ENCODE measurements at regions of chr9 and their contacts with region 1.

Region 1: DNA sequence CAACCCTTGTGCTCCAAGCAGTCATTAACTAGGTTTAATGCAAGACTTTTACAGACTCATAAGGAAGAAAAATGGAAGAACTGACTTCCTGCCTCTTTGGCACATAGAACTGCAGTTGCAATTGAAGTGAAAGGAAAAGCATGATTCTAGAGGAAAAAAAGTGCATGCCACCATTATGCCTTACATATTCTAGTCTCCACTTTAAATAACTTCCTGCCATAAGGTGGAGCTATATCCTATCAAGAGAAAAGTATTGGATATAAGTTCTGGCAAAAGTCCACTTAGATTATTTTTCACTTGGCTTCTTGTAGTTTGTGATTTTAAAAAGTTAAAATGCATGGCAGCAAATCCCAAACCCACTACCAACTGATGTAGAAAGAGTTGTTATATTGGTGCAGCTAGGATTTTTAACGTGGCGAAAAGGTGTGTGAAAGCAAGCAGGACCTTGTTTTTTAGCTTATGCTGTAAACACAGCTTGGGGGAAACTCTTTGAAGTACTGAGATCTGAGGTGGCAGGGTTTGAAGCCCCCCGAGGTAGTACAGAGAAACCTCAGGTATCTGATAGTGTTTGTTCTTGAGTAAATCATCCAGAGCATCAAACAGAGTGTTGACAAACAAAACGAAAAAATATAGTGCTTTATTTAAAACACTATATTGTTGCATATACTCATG is 117.9 kb downstream of the ANXA1 start:
- DNase-seq: peak in 1 of 3 donors; percentile 7
- H3K4me3 ChIP-seq: no peak overlapping the region
- H3K4me3 Mint-ChIP-seq: no peak overlapping the region
- H3K27ac ChIP-seq: no peak overlapping the region
- H3K27ac Mint-ChIP-seq: no peak overlapping the region
- H3K4me1 ChIP-seq: peaks cover 4 to 13% of the 10 kb centered on the region in 2 donors
- H3K4me1 Mint-ChIP-seq: peaks cover 14% of the 10 kb centered on the region
- H3K27me3 ChIP-seq: no peaks in the 10 kb centered on the region
- H3K27me3 Mint-ChIP-seq: peaks cover 0 to 2% (median 0%) of the 10 kb centered on the region in 3 donors
- CTCF ChIP-seq: no peak

Region 2: DNA sequence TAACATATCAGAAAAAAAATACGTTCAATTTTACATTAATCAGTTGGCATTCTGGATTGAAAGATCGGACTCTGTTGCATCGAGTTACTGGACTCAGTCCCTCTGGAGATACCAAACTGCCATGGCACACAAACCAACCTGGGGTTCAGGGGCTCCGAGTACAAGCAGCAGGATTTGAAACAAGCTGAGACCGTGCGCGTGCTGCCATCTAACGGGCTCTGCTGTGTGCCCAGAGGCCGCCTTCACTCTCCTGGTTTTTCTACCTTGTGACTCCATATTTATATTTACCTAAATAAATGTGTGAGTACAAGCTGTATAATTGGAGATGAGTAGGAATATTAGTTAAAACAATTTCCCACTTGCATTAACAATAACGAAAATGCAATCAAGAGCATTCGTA is 69.7 kb before region 1 on chr9:
- intact Hi-C with region 1: no loop called
- DNase-seq: no peak
- H3K4me3 ChIP-seq: no peak overlapping the region
- H3K4me3 Mint-ChIP-seq: no peak overlapping the region
- H3K27ac ChIP-seq: no peak overlapping the region
- H3K27ac Mint-ChIP-seq: no peak overlapping the region
- H3K4me1 ChIP-seq: peaks cover 8 to 19% of the 10 kb centered on the region in 2 donors
- H3K4me1 Mint-ChIP-seq: peaks cover 22% of the 10 kb centered on the region
- H3K27me3 ChIP-seq: no peaks in the 10 kb centered on the region
- H3K27me3 Mint-ChIP-seq: peaks cover 0 to 3% (median 2%) of the 10 kb centered on the region in 3 donors
- CTCF ChIP-seq: no peak

Region 3: GRCh38 chr9:73219985-73220626 is 49.5 kb before region 1 on chr9:
- intact Hi-C with region 1: loop called in 1 of 2 experiments (anchors 10 kb)
- DNase-seq: peak; percentile 77 to 97 (median 91)
- H3K4me3 ChIP-seq: no peak overlapping the region
- H3K4me3 Mint-ChIP-seq: peak overlapping the region in 1 of 2 donors; percentile 54
- H3K27ac ChIP-seq: peak overlapping the region; percentile 62 to 95
- H3K27ac Mint-ChIP-seq: peak overlapping the region; percentile 97 to 100 (median 99)
- H3K4me1 ChIP-seq: peaks cover 15 to 20% of the 10 kb centered on the region in 2 donors
- H3K4me1 Mint-ChIP-seq: peaks cover 27% of the 10 kb centered on the region
- H3K27me3 ChIP-seq: no peaks in the 10 kb centered on the region
- H3K27me3 Mint-ChIP-seq: peaks cover 0 to 4% (median 3%) of the 10 kb centered on the region in 3 donors
- CTCF ChIP-seq: no peak

Measured in CD14-positive monocyte (primary cell).